GM10248 (cell line): ENCODE measurements at regions of chr15 and their contacts with region 1.

Region 1: GRCh38 chr15:32657198-32657883 is 15.8 kb downstream of the SCG5 start:
- DNase-seq: peak; percentile 37
- CTCF ChIP-seq: peak; percentile 35

Region 2: DNA sequence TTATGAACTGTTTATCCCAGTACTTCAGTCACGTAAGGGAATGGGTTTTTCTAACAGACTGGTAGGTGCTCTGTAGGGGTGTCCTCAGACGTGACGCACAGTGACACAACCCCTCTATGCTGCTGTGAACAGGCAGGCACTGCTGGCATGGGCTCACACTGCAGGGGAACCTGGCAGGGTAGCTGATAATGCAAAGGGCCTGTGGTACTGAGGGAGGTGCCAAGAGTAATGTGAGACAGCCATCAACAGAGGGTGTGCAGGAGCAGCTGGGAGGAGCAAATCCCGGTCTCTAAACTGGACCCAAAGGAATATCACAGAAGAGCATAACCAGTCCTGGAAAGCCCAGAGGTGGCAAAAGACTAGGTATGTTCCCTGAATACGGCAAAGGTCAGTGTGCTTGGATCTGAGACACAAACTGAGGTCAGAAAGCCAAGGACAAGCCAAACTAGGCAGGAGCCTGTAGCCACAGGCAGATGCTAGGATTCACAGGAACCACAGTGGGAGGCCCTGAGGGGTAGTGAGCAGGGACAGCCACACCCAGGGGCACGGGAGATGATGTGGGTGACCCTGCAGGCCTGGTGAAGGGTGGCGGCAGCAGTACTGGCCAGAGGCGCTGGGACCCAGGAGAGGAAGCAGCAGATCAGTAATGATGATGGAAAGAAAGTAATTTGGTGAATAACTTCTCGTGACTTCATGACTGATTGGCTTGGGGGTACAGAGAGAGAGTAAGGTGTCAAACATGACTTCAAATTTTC is 875.1 kb before region 1 on chr15:
- CTCF ChIA-PET with region 1: no interaction called
- POLR2A ChIA-PET with region 1: no interaction called
- DNase-seq: no peak
- CTCF ChIP-seq: no peak

Region 3: DNA sequence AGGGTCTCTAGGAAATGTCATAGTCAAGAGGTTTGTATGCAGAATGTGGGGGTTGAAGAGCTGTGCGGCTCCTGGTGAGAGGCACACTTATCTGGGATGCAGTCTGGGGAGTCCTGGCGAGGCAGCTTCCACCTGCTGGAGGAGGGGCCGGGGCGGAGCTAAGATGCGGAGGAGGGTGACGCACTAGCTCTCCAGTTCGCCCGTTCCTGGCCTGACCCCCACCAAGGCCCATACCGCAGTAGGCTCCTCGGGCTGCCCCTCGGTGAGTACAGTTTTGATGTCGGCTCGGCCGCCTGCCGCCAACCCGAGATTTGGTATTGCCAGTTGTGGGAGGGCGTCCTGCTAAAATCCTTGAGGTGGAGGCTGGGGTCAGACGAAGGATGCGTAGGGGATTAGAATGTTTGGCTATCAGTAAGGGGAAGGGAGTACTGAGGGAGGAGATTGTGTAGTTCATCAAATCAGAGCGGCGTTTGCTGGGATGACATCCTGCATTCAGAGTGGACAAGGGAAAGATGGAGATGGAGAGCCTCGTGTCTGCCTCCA is 15.8 kb before region 1 on chr15 and contains the start of gene SCG5:
- CTCF ChIA-PET with region 1: interaction called, 80 read pairs
- POLR2A ChIA-PET with region 1: no interaction called
- DNase-seq: no peak
- CTCF ChIP-seq: no peak

Region 4: GRCh38 chr15:32669896-32670619 is 12.7 kb after region 1 on chr15:
- CTCF ChIA-PET with region 1: interaction called, 19 read pairs
- POLR2A ChIA-PET with region 1: no interaction called
- DNase-seq: no peak
- CTCF ChIP-seq: no peak

Region 5: GRCh38 chr15:32677238-32677750 is 20.0 kb after region 1 on chr15:
- CTCF ChIA-PET with region 1: interaction called, 19 read pairs
- POLR2A ChIA-PET with region 1: no interaction called
- DNase-seq: no peak
- CTCF ChIP-seq: no peak

Region 6: GRCh38 chr15:32994810-32995424 is 337.6 kb after region 1 on chr15:
- CTCF ChIA-PET with region 1: interaction called, 95 read pairs
- POLR2A ChIA-PET with region 1: no interaction called
- DNase-seq: peak; percentile 12
- CTCF ChIP-seq: peak; percentile 33

Region 7: GRCh38 chr15:33067941-33068481 is 410.7 kb after region 1 on chr15:
- CTCF ChIA-PET with region 1: no interaction called
- POLR2A ChIA-PET with region 1: no interaction called
- DNase-seq: no peak
- CTCF ChIP-seq: no peak